ENCODE measurements at regions of chr1 and their contacts with region 1.

Region 1: DNA sequence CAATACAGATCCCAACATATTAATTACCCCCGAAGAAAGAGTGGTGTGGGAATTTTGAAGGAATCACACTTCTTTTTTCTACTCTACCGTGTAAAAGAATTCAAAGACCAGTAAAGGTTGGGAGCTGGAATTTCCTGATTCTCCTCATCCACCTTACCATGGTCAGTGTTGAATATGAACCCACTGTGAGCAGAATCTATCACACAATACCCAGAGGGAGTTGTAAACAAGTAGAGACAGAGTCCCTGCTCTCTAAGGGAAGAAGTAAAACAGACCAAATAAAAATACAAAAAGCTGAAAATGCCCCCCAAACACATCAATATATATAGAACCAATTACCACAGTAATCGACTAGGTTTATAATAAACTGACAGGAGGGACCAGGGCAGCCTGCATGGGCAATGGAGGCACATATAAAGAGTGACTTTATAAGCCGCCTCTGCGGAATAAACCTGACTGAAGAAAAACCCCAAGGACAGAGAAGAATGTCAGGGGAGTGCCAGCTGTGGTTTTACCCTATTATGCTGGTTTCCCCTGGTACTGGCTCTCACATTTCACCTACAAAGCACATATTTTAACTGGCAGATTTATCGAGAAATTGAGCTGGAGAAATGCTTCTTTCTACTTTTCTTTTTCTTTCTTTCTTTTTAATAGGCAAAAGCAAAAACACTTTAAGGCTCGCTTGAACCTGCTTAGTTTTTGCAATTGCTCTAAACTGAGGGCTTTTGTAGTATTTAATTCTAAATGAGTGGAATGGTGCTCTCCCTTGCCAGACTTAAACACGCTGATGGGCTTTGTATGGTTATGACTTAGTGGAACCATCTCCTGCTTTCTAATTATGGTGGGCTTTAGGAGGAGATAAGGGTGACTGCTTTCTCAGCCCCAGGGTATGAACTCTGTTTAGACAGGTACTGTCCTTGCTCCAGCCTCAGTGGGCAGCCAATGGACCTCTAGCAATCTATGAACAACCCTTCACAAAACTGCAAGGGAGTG is 244.8 kb downstream of the ASTN1 start:
- DNase-seq: no peak
- ATAC-seq: no peak
- H3K4me3 ChIP-seq: no peak overlapping the region
- H3K27ac ChIP-seq: no peak overlapping the region
- H3K4me1 ChIP-seq: no peaks in the 10 kb centered on the region
- H3K27me3 ChIP-seq: no peaks in the 10 kb centered on the region
- CTCF ChIP-seq: no peak
- POLR2A ChIP-seq: no peak
- RAD21 ChIP-seq: no peak

Region 2: GRCh38 chr1:177505905-177506590 is 586.4 kb after region 1 on chr1:
- CTCF ChIA-PET with region 1: no interaction called
- POLR2A ChIA-PET with region 1: no interaction called
- dilution Hi-C with region 1: no loop called
- in situ Hi-C with region 1: no loop called
- intact Hi-C with region 1: loop called (anchors 5 kb)
- DNase-seq: no peak
- ATAC-seq: no peak
- H3K4me3 ChIP-seq: no peak overlapping the region
- H3K27ac ChIP-seq: no peak overlapping the region
- H3K4me1 ChIP-seq: no peaks in the 10 kb centered on the region
- H3K27me3 ChIP-seq: no peaks in the 10 kb centered on the region
- CTCF ChIP-seq: no peak
- POLR2A ChIP-seq: no peak
- RAD21 ChIP-seq: no peak